Right ventricle myocardium superior (tissue), 1 donor: ENCODE measurements at regions of chr4 and their contacts with region 1.

Region 1: GRCh38 chr4:76504613-76505465 is 69.8 kb downstream of the SHROOM3 start:
- DNase-seq: no peak
- ATAC-seq: peak; percentile 74

Region 2: GRCh38 chr4:76430519-76431388 is 74.1 kb before region 1 on chr4:
- intact Hi-C with region 1: loop called (anchors 5 kb)
- DNase-seq: no peak
- ATAC-seq: peak; percentile 53

Region 3: GRCh38 chr4:76626686-76627465 is 122.0 kb after region 1 on chr4:
- intact Hi-C with region 1: no loop called
- DNase-seq: no peak
- ATAC-seq: no peak